Naive thymus-derived CD4-positive, alpha-beta T cell (primary cell): ENCODE measurements at regions of chr9 and their contacts with region 1.

Region 1: DNA sequence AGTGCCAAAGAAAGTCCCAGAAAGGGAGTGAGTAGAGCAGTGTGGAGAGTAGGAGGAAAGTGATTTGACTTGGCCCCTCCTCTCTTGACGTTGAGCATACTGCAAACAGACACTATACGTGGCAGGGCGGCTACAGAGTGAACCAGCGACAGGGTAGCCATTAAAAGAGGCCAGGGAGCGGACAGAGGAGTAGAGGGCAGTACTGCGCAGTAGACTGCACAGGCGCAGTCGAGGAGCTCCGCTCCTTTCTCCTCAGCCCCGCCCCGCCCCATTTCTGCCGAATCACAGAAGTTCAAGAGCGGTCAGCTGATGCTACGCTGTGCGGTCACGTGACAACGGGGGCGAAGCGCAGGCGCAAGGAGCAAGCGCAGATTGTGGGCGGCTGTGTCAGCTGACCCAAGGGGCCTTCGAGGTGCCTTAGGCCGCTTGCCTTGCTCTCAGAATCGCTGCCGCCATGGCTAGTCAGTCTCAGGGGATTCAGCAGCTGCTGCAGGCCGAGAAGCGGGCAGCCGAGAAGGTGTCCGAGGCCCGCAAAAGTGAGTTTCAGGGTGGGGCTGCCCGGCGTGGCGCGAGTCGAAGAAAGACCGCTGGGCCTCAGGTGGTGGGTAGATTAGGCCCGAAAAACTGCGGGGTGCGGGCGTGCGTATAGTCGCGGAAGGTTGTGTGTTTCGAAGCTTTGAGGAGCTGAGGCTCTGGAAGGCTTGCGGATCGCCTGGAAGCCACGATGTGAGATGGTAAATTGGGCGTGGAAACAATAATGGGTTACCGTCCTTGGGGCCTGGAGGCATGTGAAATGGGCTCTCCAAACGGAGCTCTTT is at the start of gene ATP6V1G1:
- DNase-seq: peak; percentile 93 to 99 (median 97)
- ATAC-seq: peak; percentile 97
- H3K4me3 ChIP-seq: peak within 1 kb of the TSS; percentile 94
- H3K4me3 Mint-ChIP-seq: peak within 1 kb of the TSS; percentile 95 to 99 (median 98)
- H3K27ac ChIP-seq: peak within 1 kb of the TSS; percentile 99
- H3K27ac Mint-ChIP-seq: peak within 1 kb of the TSS; percentile 91 to 100 (median 99)
- H3K4me1 ChIP-seq: peaks cover 33 to 35% of the 10 kb centered on the region in 2 donors
- H3K4me1 Mint-ChIP-seq: peaks cover 43 to 53% (median 49%) of the 10 kb centered on the region in 7 donors
- H3K27me3 ChIP-seq: no peaks in the 10 kb centered on the region
- H3K27me3 Mint-ChIP-seq: peaks cover 0 to 6% (median 0%) of the 10 kb centered on the region in 5 donors
- total RNA-seq, gene ATP6V1G1: 86.2 to 136 (median 130) TPM

Region 2: GRCh38 chr9:114385412-114386181 is 202.0 kb before region 1 on chr9:
- CTCF ChIA-PET with region 1: interaction called, 4 read pairs
- POLR2A ChIA-PET with region 1: interaction called, 39 read pairs
- intact Hi-C with region 1: loop called in 1 of 2 experiments (anchors 1 kb)
- DNase-seq: peak; percentile 68 to 96 (median 93)
- ATAC-seq: peak; percentile 88
- H3K4me3 ChIP-seq: peak overlapping the region; percentile 63
- H3K4me3 Mint-ChIP-seq: peak overlapping the region; percentile 89 to 100 (median 96)
- H3K27ac ChIP-seq: peak overlapping the region; percentile 87
- H3K27ac Mint-ChIP-seq: peak overlapping the region; percentile 88 to 100 (median 96)
- H3K4me1 ChIP-seq: peaks cover 72 to 75% of the 10 kb centered on the region in 2 donors
- H3K4me1 Mint-ChIP-seq: peaks cover 61 to 77% (median 70%) of the 10 kb centered on the region in 7 donors
- H3K27me3 ChIP-seq: no peaks in the 10 kb centered on the region
- H3K27me3 Mint-ChIP-seq: no peaks in the 10 kb centered on the region

Region 3: GRCh38 chr9:114420581-114420980 is 167.0 kb before region 1 on chr9:
- CTCF ChIA-PET with region 1: no interaction called
- POLR2A ChIA-PET with region 1: no interaction called
- intact Hi-C with region 1: no loop called
- DNase-seq: no peak
- ATAC-seq: no peak
- H3K4me3 ChIP-seq: no peak overlapping the region
- H3K4me3 Mint-ChIP-seq: no peak overlapping the region
- H3K27ac ChIP-seq: no peak overlapping the region
- H3K27ac Mint-ChIP-seq: no peak overlapping the region
- H3K4me1 ChIP-seq: no peaks in the 10 kb centered on the region
- H3K4me1 Mint-ChIP-seq: peaks cover 0 to 21% (median 0%) of the 10 kb centered on the region in 7 donors
- H3K27me3 ChIP-seq: no peaks in the 10 kb centered on the region
- H3K27me3 Mint-ChIP-seq: no peaks in the 10 kb centered on the region

Region 4: DNA sequence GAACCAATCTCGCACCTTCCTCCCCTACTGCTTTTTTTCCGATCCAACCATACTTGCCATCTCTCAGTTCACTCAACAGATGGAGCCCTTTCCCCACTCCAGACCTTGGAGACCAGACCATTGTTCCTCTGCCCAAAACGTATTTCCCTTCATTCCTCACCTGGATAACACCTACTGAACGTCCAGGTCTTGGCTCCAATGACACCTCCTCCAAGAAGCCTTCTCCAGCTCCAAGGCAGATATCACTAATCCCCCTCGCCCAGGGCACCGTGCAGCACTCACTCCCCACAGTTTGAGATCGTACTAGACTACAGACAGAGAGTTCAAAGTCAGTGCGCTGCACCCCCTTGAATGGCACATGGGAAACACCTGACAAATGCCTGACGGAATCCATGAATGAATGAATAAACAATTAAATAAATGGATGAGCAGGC is 152.7 kb before region 1 on chr9:
- CTCF ChIA-PET with region 1: interaction called, 11 read pairs
- POLR2A ChIA-PET with region 1: no interaction called
- intact Hi-C with region 1: no loop called
- DNase-seq: peak in 4 of 9 donors; percentile 9 to 20 (median 15)
- ATAC-seq: no peak
- H3K4me3 ChIP-seq: no peak overlapping the region
- H3K4me3 Mint-ChIP-seq: no peak overlapping the region
- H3K27ac ChIP-seq: no peak overlapping the region
- H3K27ac Mint-ChIP-seq: no peak overlapping the region
- H3K4me1 ChIP-seq: no peaks in the 10 kb centered on the region
- H3K4me1 Mint-ChIP-seq: peaks cover 0 to 5% (median 4%) of the 10 kb centered on the region in 7 donors
- H3K27me3 ChIP-seq: no peaks in the 10 kb centered on the region
- H3K27me3 Mint-ChIP-seq: peaks cover 0 to 16% (median 0%) of the 10 kb centered on the region in 5 donors

Region 5: GRCh38 chr9:114538241-114538640 is 49.4 kb before region 1 on chr9:
- CTCF ChIA-PET with region 1: no interaction called
- POLR2A ChIA-PET with region 1: interaction called, 6 read pairs
- intact Hi-C with region 1: loop called in 1 of 2 experiments (anchors 2 kb)
- DNase-seq: peak in 7 of 9 donors; percentile 11 to 43 (median 23)
- ATAC-seq: peak; percentile 92
- H3K4me3 ChIP-seq: no peak overlapping the region
- H3K4me3 Mint-ChIP-seq: no peak overlapping the region
- H3K27ac ChIP-seq: no peak overlapping the region
- H3K27ac Mint-ChIP-seq: peak overlapping the region in 4 of 9 donors; percentile 13 to 67 (median 42)
- H3K4me1 ChIP-seq: no peaks in the 10 kb centered on the region
- H3K4me1 Mint-ChIP-seq: peaks cover 0 to 13% (median 7%) of the 10 kb centered on the region in 7 donors
- H3K27me3 ChIP-seq: no peaks in the 10 kb centered on the region
- H3K27me3 Mint-ChIP-seq: peaks cover 0 to 38% (median 0%) of the 10 kb centered on the region in 5 donors

Region 6: DNA sequence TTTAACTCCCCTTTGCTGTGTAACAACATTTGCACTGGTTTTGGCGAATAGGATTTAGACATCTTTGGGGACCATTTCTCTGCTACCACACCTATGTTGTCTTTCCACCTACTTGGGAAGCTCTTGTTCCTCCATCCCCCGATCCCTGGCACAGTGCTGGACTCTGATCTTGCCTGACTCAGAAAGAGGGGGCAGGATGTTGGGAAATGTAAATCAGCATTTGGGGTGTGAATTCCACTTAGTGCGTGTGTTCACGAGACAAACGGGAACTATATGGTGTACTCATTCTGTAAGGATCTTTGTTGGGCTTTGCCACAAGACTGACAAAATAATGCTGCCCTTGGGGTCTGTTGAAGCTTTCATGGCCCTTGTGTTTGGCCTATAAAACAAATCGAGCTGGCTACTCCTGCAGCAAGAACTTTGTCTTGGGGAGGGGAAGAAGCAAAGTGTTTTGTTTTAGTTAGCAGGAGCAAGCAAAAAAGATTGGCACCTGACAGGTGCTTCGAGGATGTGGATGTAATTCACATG is 42.0 kb after region 1 on chr9:
- CTCF ChIA-PET with region 1: no interaction called
- POLR2A ChIA-PET with region 1: interaction called, 3 read pairs
- intact Hi-C with region 1: loop called in 1 of 2 experiments (anchors 5 kb)
- DNase-seq: no peak
- ATAC-seq: no peak
- H3K4me3 ChIP-seq: no peak overlapping the region
- H3K4me3 Mint-ChIP-seq: no peak overlapping the region
- H3K27ac ChIP-seq: no peak overlapping the region
- H3K27ac Mint-ChIP-seq: peak overlapping the region in 1 of 9 donors; percentile 53
- H3K4me1 ChIP-seq: no peaks in the 10 kb centered on the region
- H3K4me1 Mint-ChIP-seq: peaks cover 0 to 5% (median 0%) of the 10 kb centered on the region in 7 donors
- H3K27me3 ChIP-seq: no peaks in the 10 kb centered on the region
- H3K27me3 Mint-ChIP-seq: no peaks in the 10 kb centered on the region